ENCODE measurements at regions of chr6 and their contacts with region 1.

Region 1: GRCh38 chr6:89638320-89639195 is at the start of gene LYRM2:
- DNase-seq: peak; percentile 89
- H3K4me3 Mint-ChIP-seq: peak within 1 kb of the TSS; percentile 94
- H3K27ac Mint-ChIP-seq: peak within 1 kb of the TSS; percentile 96
- H3K4me1 Mint-ChIP-seq: peaks cover 29% of the 10 kb centered on the region
- H3K27me3 Mint-ChIP-seq: no peaks in the 10 kb centered on the region
- total RNA-seq, gene LYRM2: 32.8 and 34.7 TPM in 2 replicates

Region 2: GRCh38 chr6:88982720-88983119 is 655.8 kb before region 1 on chr6:
- intact Hi-C with region 1: loop called (anchors 1 kb)
- DNase-seq: no peak
- H3K4me3 Mint-ChIP-seq: no peak overlapping the region
- H3K27ac Mint-ChIP-seq: no peak overlapping the region
- H3K4me1 Mint-ChIP-seq: no peaks in the 10 kb centered on the region
- H3K27me3 Mint-ChIP-seq: peaks cover 4% of the 10 kb centered on the region

Region 3: GRCh38 chr6:89258912-89259311 is 379.6 kb before region 1 on chr6:
- intact Hi-C with region 1: no loop called
- DNase-seq: no peak
- H3K4me3 Mint-ChIP-seq: no peak overlapping the region
- H3K27ac Mint-ChIP-seq: no peak overlapping the region
- H3K4me1 Mint-ChIP-seq: no peaks in the 10 kb centered on the region
- H3K27me3 Mint-ChIP-seq: peaks cover 4% of the 10 kb centered on the region

Region 4: DNA sequence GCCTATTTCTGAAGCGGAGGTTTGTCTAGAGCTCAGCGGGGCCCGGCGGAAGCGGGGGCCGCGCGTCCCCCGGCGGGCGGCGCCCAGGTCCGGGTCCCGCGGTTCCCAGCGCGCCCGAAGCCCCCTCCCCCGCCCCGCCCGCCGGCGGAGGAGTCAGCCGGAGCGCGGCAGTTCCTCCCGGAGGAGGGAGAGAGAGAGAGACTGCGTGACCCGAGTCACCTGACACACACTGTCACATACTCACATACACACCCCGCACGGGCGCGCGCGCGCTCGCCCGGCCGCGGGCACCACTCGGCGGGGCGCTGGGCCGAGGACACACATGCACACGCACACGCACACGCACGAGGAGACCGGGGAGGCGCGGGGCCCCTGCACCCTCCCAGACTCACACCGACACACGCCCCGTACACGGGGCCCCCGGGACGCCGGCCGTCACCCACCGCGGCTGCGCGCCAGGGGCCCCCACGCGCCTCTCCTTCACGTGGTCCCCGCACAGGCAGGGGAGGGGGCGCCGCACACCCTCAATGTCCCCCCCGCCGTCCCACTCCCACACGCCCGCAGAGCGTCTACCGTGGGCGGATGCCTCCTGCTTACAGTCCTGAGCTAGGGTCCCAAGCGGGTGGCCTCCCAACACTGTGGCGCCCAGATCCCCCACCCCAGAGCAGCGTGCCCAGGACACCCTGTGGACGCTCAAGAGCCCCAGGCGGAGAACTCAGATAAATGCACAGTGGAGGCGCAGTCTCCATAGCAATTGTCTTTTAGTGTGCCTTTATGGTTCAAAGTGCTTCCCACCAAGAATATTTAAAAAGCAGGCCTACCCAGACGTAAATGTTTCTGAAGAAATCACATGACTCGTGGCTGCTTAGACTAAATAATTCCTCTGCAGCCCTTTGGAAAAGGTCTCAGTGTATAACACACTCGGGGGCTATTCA is 226.2 kb before region 1 on chr6 and contains the start of gene RRAGD:
- intact Hi-C with region 1: loop called (anchors 1 kb)
- DNase-seq: peak; percentile 49
- H3K4me3 Mint-ChIP-seq: peak within 1 kb of the TSS; percentile 95
- H3K27ac Mint-ChIP-seq: peak within 1 kb of the TSS; percentile 94
- H3K4me1 Mint-ChIP-seq: peaks cover 25% of the 10 kb centered on the region
- H3K27me3 Mint-ChIP-seq: peaks cover 50% of the 10 kb centered on the region
- total RNA-seq, gene RRAGD: 7.8 and 10.1 TPM in 2 replicates

Region 5: GRCh38 chr6:89597988-89598692 is 40.4 kb before region 1 on chr6:
- intact Hi-C with region 1: loop called (anchors 1 kb)
- DNase-seq: no peak
- H3K4me3 Mint-ChIP-seq: peak overlapping the region; percentile 12
- H3K27ac Mint-ChIP-seq: peak overlapping the region; percentile 75
- H3K4me1 Mint-ChIP-seq: peaks cover 45% of the 10 kb centered on the region
- H3K27me3 Mint-ChIP-seq: no peaks in the 10 kb centered on the region

Region 6: DNA sequence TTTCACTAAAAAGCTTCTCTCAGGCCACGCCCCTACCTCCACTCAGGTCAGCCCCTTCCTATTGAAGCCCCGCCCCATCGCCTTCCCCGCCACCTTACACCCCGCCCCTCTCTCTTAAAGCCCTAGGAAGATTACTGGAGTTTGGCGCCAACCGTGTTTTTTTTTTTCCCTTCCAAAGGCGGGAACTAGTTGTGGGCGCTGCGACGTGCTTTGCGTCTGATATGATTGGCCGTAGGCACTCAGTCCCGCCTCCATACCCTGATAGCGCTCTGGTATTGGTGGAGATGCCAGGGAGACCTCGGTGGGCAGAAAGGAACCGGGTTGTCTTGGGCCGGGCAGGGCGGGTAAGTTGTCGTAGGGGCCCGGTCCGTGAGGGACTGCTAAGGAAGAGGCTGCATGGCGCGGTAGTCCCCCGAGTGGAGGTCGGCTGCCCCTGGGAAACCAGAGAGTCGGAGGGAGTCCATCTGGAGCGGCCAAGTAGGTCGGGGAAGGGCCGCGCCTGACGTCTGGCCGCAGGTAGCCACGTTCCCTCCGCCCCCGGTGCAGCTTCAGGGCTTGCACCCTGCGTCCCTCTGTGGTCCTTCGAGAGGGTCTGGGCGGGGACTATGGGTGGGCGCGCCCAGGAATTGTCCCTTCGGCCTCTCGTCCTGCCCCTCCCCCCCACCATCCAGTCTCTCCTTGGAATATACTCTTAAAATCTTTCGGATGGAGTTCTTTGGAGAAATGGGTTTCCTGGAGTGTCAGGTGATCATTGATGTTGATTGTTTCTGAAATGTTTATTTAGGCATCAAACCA is 191.2 kb after region 1 on chr6 and contains the start of gene CASP8AP2:
- intact Hi-C with region 1: loop called (anchors 1 kb)
- DNase-seq: peak; percentile 93
- H3K4me3 Mint-ChIP-seq: peak within 1 kb of the TSS; percentile 97
- H3K27ac Mint-ChIP-seq: peak within 1 kb of the TSS; percentile 91
- H3K4me1 Mint-ChIP-seq: peaks cover 23% of the 10 kb centered on the region
- H3K27me3 Mint-ChIP-seq: no peaks in the 10 kb centered on the region
- total RNA-seq, gene CASP8AP2: 38.3 and 40.2 TPM in 2 replicates

Region 7: GRCh38 chr6:90586836-90587638 is 948.5 kb after region 1 on chr6 and contains the start of gene MAP3K7:
- intact Hi-C with region 1: loop called (anchors 1 kb)
- DNase-seq: peak; percentile 92
- H3K4me3 Mint-ChIP-seq: peak within 1 kb of the TSS; percentile 93
- H3K27ac Mint-ChIP-seq: peak within 1 kb of the TSS; percentile 96
- H3K4me1 Mint-ChIP-seq: peaks cover 39% of the 10 kb centered on the region
- H3K27me3 Mint-ChIP-seq: peaks cover 8% of the 10 kb centered on the region
- total RNA-seq, gene MAP3K7: 31.0 and 35.9 TPM in 2 replicates

Measured in activated T-helper 1 cell treated with anti-CD3 and anti-CD28 coated beads, Interleukin-12 subunit alpha, Interleukin-12 subunit beta, Interleukin-2, Interleukin-4 antibody, amounts not matched to agents 30 ng/mL and 10 ng/mL and 1 ng/mL, durations not matched to agents 14 hours and 24 hours and 36 hours (primary cell).